ENCODE measurements at regions of chr14 and their contacts with region 1.

Region 1: DNA sequence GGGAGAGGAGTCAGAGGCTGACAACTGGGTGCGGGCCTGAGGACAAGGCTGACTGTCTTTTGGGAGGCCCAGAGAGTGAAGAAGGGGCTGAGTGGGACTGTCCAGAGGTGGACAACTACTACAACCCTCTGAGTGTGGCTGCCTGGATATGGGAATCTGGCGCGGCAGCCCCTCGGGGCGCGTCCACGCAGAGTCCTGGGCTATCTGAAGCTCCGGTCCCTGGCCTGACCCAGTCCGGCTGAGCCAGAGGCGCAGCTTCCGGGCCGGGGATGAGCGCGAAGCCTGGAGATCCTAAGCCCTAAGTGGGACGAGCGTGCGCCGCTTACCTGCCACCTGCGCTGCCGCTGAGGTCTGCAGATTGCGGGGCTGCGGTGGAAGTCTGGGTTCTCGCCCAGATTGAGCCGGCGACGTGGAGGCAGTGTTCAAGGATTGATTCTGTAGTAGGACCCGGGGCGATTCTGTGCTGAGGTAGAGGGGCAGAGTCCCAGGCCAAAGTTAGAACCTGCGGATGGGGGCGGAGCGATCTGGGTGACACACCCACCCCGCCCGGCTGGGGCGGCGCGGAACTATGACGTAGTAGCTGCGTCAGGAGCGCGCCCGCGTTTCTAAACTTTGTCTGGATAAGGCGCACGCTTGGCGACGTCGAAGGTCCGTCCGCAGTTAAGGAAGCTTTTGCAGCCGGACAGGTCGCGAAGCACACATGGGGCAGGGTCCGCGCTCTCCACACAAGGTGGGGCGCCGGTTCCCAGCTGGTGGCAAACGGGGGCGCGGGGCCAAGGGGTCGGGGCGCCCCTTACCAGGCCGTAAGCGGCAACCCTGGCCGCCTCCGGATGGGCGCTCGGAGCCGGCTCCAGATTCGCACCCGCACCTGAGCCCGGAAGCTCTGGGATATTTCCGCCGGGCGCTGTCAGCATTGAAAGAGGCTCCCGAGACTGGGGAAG is at the starts of genes DHRS1 and NOP9:
- DNase-seq: peak; percentile 85
- ATAC-seq: peak; percentile 83
- H3K4me3 ChIP-seq: peak within 1 kb of the TSS; percentile 63
- H3K27ac ChIP-seq: peak within 1 kb of the TSS; percentile 41
- H3K4me1 ChIP-seq: peaks cover 9% of the 10 kb centered on the region
- H3K27me3 ChIP-seq: no peaks in the 10 kb centered on the region
- CTCF ChIP-seq: no peak
- POLR2A ChIP-seq: peak; percentile 52; the same call in 1 of the 2 replicates
- RAD21 ChIP-seq: no peak
- total RNA-seq, gene DHRS1: 13.1 and 15.8 TPM in 2 replicates
- total RNA-seq, gene NOP9: 22.5 and 25.8 TPM in 2 replicates

Region 2: DNA sequence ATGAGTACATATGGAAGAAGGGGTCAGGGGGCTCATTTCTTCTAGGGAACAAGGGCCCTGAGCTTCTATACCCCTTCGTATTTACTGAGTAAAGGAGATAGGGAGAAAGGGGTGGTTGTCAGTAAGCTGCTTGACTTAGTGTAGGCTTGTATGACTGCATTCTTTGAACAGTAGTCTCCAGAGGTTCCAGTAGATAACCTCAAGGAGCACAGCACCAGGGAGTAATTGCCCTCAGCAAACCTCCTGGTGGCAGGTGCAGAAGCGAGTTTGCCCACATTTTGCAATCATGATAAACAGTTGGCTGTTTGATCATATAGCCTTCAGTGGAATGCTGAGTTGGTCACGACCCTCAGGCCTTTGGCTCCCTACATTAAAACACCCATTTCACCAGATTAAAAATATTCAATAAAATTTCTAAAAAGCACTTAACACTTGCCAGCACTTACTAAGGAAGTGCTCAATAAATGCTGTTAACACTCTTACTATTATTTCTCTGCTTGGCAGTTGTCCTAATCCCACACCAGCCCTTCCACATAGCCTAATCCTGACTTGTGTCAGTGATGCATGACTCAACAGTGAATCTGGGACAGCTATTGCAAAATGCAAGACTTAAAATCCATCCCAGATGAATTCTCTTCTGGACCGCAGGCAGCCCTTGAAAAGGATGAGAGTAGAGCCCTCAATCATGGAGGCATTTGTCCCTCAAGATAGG is 314.5 kb before region 1 on chr14:
- CTCF ChIA-PET with region 1: no interaction called
- POLR2A ChIA-PET with region 1: no interaction called
- dilution Hi-C with region 1: no loop called
- in situ Hi-C with region 1: no loop called
- intact Hi-C with region 1: loop called (anchors 10 kb)
- DNase-seq: peak; percentile 86
- ATAC-seq: peak; percentile 23
- H3K4me3 ChIP-seq: no peak overlapping the region
- H3K27ac ChIP-seq: no peak overlapping the region
- H3K4me1 ChIP-seq: no peaks in the 10 kb centered on the region
- H3K27me3 ChIP-seq: no peaks in the 10 kb centered on the region
- CTCF ChIP-seq: no peak
- POLR2A ChIP-seq: no peak
- RAD21 ChIP-seq: no peak

Region 3: GRCh38 chr14:24146978-24147760 is 152.4 kb before region 1 on chr14 and contains the start of gene RNF31:
- CTCF ChIA-PET with region 1: no interaction called
- POLR2A ChIA-PET with region 1: no interaction called
- dilution Hi-C with region 1: no loop called
- in situ Hi-C with region 1: no loop called
- intact Hi-C with region 1: loop called (anchors 2 kb)
- DNase-seq: peak; percentile 98
- ATAC-seq: peak; percentile 91
- H3K4me3 ChIP-seq: peak within 1 kb of the TSS; percentile 86
- H3K27ac ChIP-seq: peak within 1 kb of the TSS; percentile 79
- H3K4me1 ChIP-seq: peaks cover 9% of the 10 kb centered on the region
- H3K27me3 ChIP-seq: no peaks in the 10 kb centered on the region
- CTCF ChIP-seq: no peak
- POLR2A ChIP-seq: no peak
- RAD21 ChIP-seq: no peak
- total RNA-seq, gene RNF31: 26.1 and 37.5 TPM in 2 replicates

Region 4: GRCh38 chr14:24215495-24216344 is 83.8 kb before region 1 on chr14 and contains the start of gene MDP1:
- CTCF ChIA-PET with region 1: interaction called, 3 read pairs
- POLR2A ChIA-PET with region 1: no interaction called
- dilution Hi-C with region 1: no loop called
- in situ Hi-C with region 1: no loop called
- intact Hi-C with region 1: loop called (anchors 1 kb)
- DNase-seq: peak; percentile 83
- ATAC-seq: peak; percentile 71
- H3K4me3 ChIP-seq: peak within 1 kb of the TSS; percentile 74
- H3K27ac ChIP-seq: peak within 1 kb of the TSS; percentile 88
- H3K4me1 ChIP-seq: peaks cover 2% of the 10 kb centered on the region
- H3K27me3 ChIP-seq: no peaks in the 10 kb centered on the region
- CTCF ChIP-seq: peak; percentile 75
- POLR2A ChIP-seq: peak; percentile 82
- RAD21 ChIP-seq: peak; percentile 77
- total RNA-seq, gene MDP1: 15.1 and 16.7 TPM in 2 replicates

Region 5: DNA sequence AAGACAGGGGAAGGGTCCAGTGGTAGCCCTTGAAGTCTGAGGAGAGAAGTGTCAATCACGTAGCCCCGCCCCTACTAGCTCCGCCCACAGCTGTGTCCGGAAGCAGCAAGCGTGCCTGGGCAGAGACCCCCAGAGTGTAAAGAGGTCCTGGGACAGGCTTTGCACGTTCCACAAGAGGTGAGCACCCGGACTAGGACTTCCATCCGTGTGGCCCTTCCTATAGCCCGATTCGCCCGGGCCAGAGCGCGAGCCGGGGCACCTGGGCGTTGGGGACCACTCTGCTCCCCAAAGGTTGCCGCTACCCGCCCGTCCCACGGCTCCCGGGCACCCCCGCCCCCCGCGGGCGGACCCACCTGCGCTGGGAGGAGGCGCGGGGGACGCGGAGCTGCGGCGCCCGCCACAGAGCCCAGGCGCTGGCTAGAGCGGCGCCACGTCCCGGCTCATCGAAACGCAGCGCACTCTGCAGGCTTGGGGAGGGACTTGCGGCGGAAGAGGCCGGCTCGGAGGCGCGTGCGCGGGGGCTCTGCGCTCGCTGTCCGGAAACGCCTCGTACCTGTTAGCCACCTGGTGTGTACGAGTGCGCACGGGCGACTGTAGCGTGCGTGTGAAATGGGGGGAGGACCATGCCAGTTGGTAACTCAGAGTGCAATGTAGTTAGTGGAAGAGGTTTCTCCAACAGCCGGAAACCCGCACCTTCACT is 28.2 kb before region 1 on chr14 and contains the start of gene RABGGTA:
- CTCF ChIA-PET with region 1: no interaction called
- POLR2A ChIA-PET with region 1: no interaction called
- dilution Hi-C with region 1: no loop called
- in situ Hi-C with region 1: no loop called
- intact Hi-C with region 1: loop called (anchors 1 kb)
- DNase-seq: peak; percentile 83
- ATAC-seq: peak; percentile 100
- H3K4me3 ChIP-seq: peak within 1 kb of the TSS; percentile 63
- H3K27ac ChIP-seq: peak within 1 kb of the TSS; percentile 89
- H3K4me1 ChIP-seq: peaks cover 5% of the 10 kb centered on the region; the same call in 1 of the 2 replicates
- H3K27me3 ChIP-seq: no peaks in the 10 kb centered on the region
- CTCF ChIP-seq: peak; percentile 87
- POLR2A ChIP-seq: peak; percentile 63; the same call in 1 of the 2 replicates
- RAD21 ChIP-seq: 0 out of 2 replicates have a peak, but pooled peaks have one; percentile 30
- total RNA-seq, gene RABGGTA: 25.6 and 27.2 TPM in 2 replicates

Region 6: GRCh38 chr14:24315807-24316603 is 16.5 kb after region 1 on chr14:
- CTCF ChIA-PET with region 1: no interaction called
- POLR2A ChIA-PET with region 1: no interaction called
- dilution Hi-C with region 1: no loop called
- in situ Hi-C with region 1: no loop called
- intact Hi-C with region 1: no loop called
- DNase-seq: no peak
- ATAC-seq: peak; percentile 28
- H3K4me3 ChIP-seq: no peak overlapping the region
- H3K27ac ChIP-seq: no peak overlapping the region
- H3K4me1 ChIP-seq: peaks cover 2% of the 10 kb centered on the region; the same call in 1 of the 2 replicates
- H3K27me3 ChIP-seq: peaks cover 37% of the 10 kb centered on the region
- CTCF ChIP-seq: peak; percentile 9; the same call in 1 of the 2 replicates
- POLR2A ChIP-seq: no peak
- RAD21 ChIP-seq: no peak